ENCODE measurements at regions of chr14 and their contacts with region 1.

Region 1: DNA sequence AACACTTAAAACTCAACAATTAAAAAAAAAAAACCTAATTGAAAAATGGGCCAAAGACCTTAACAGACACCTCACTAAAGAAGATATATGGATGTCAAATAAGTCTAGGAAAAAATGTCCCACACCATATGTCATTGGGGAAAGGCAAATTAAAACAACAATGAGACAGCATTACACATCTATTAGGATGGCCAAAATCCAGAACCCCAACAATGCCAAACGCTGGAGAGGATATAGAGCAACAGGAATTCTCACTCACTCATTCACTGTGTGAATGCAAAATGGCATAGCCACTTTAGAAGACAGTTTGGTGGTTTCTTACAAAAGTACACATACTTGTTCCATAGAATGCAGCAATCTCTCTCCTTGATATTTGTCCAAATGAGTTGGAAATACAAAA is 173.7 kb downstream of the SLC25A21 start:
- DNase-seq: no peak
- H3K4me3 Mint-ChIP-seq: no peak overlapping the region
- H3K27ac Mint-ChIP-seq: no peak overlapping the region
- H3K4me1 Mint-ChIP-seq: no peaks in the 10 kb centered on the region
- H3K27me3 Mint-ChIP-seq: no peaks in the 10 kb centered on the region
- CTCF ChIP-seq: no peak

Region 2: DNA sequence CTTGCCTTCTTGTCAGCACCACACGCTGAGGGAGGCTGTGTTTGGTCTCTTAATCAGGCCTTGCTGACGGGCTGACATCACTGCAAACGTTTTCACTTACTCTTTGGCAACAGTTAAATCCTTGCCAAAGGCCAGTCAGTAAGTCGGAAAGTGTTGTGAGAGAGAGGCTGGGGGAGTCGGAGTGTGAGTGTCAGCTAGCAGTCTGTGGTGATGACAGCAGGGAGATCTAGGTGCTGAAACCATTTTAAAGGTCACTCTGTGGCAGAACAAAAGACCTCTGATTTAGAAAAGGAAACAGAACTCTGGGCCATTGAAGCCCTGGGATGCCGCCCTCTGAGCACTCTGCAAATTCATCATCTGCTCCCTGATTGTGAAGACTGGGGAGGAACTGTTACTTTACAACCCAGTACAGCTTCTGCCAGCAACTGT is 193.5 kb before region 1 on chr14:
- CTCF ChIA-PET with region 1: no interaction called
- intact Hi-C with region 1: no loop called
- DNase-seq: no peak
- H3K4me3 Mint-ChIP-seq: no peak overlapping the region
- H3K27ac Mint-ChIP-seq: no peak overlapping the region
- H3K4me1 Mint-ChIP-seq: no peaks in the 10 kb centered on the region
- H3K27me3 Mint-ChIP-seq: no peaks in the 10 kb centered on the region
- CTCF ChIP-seq: no peak

Region 3: DNA sequence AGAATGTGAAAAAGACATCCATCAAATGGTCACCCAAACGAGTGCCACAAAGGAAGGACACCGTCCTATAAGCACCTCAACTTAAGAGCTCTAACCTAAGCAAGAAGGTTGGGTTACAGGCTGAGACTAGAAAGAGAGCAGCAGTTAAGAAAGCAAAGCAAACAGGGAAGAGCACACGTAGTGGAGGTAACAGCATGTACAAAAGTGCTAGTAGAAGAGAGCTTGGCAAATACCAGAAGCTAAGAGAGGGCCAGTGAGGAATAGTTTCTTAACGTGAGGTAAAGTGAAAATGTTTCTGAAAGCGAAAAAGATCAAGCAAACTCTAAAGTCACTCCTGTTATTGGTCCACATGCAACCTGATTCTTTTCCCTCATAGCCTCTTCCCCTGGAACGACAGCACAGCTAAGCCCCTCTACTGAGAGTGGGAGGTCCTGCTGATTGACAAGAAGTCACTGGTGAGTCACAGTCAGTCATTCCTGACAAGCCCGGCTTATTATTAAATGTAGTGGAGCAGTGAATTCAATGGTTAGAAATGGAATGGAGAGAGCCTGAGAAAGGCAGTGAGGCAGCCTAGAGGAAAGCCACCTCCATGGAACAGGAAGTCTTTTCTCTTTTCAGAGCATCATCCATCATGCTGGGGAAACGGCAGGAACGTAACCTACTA is 30.7 kb before region 1 on chr14:
- CTCF ChIA-PET with region 1: no interaction called
- intact Hi-C with region 1: loop called (anchors 1 kb)
- DNase-seq: no peak
- H3K4me3 Mint-ChIP-seq: no peak overlapping the region
- H3K27ac Mint-ChIP-seq: peak overlapping the region; percentile 13
- H3K4me1 Mint-ChIP-seq: peaks cover 21% of the 10 kb centered on the region
- H3K27me3 Mint-ChIP-seq: no peaks in the 10 kb centered on the region
- CTCF ChIP-seq: no peak